Aorta (tissue), 5 donors: ENCODE measurements at regions of chr19 and their contacts with region 1.

Region 1: DNA sequence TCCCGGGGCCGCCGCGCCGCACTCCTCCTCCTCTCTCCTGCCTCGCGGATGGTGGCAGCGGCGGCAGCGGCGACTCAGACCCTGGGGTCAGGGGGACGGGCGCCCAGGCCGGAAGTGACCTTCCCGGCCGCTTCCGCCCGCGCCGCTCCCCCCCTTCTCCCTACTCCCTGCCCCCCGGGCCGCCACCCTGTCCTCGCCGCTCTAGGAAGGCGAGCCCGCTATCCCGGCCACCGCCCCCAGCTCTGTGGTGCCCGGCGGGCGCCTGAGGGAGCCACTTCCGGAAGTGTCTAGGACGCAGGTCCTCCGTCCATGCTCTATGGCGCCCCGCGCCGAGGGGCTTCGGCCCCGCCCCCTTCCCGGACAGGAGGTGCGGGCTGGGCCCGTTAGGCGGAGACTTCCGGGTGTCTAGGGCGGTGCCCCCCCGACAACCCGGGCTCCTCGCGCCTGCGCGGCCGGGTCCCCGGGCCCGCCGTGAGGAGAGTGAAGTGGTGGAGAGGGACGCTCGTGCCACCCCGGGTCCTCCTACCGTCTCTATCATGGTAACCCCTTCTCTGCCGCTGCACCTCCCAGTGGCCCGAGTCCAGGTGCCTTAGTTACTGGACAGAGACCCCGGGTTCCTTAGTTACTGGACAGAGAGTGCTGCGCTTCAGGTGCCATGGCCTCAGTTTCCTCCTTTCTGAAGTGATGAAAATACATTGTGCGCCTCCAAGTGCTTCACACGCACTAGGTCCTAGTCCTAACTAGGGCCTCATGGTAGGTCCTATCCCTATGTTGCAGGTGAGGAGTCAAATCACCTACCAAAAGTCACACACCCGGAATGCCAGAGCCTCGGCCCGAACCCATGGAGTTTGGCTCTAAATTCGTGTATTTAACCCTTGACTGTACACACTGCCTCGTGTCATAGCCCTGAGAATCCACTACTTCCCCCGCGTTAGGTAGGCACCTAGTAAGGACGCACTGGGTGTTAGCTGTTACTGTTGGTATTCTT is at the start of gene ZNF787:
- DNase-seq: peak; percentile 99
- ATAC-seq: peak; percentile 98
- H3K4me3 ChIP-seq: peak within 1 kb of the TSS; percentile 69 to 90
- H3K27ac ChIP-seq: peak within 1 kb of the TSS in 1 of 2 donors; percentile 71
- H3K4me1 ChIP-seq: no peaks in the 10 kb centered on the region
- H3K27me3 ChIP-seq: no peaks in the 10 kb centered on the region
- total RNA-seq, gene ZNF787: 23.9 to 25.5 TPM

Region 2: DNA sequence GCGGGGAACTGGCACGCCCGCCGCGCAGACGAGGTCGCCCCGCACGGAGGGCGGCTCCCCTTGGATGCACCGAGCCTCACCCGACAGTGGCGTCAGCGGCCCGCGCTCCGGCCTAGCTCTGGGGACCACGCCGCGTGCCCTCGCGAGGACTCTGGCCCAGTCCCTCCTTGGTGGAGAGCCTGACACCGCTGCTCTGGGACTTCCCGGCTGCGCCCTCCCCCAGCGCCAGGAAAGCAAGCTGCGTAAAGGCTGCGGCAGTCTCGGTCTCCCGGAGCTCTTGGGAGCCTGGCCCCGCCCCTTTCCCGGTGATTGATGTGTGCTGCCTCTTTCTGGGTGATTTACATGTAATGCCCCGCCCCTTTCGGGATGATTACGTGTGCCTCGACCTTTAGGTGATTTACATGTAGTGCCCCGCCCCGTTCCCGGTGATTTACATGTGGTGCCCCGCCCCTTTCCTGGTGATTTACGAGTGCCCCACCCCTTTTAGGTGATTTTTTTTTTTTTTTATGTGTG is 1657.9 kb before region 1 on chr19 and contains the start of gene LENG9:
- intact Hi-C with region 1: loop called in 1 of 2 experiments (anchors 10 kb)
- DNase-seq: peak; percentile 99
- ATAC-seq: peak; percentile 87
- H3K4me3 ChIP-seq: peak within 1 kb of the TSS; percentile 39 to 47
- H3K27ac ChIP-seq: peak within 1 kb of the TSS; percentile 62 to 98
- H3K4me1 ChIP-seq: no peaks in the 10 kb centered on the region
- H3K27me3 ChIP-seq: no peaks in the 10 kb centered on the region
- total RNA-seq, gene LENG9: 5.4 to 7.4 TPM

Region 3: GRCh38 chr19:55653758-55654539 is 467.5 kb before region 1 on chr19:
- intact Hi-C with region 1: loop called in 1 of 2 experiments (anchors 10 kb)
- DNase-seq: peak; percentile 100
- ATAC-seq: peak; percentile 94
- H3K4me3 ChIP-seq: peak overlapping the region; percentile 39 to 57
- H3K27ac ChIP-seq: peak overlapping the region in 1 of 2 donors; percentile 97
- H3K4me1 ChIP-seq: peaks cover 0 to 6% of the 10 kb centered on the region in 2 donors
- H3K27me3 ChIP-seq: no peaks in the 10 kb centered on the region

Region 4: DNA sequence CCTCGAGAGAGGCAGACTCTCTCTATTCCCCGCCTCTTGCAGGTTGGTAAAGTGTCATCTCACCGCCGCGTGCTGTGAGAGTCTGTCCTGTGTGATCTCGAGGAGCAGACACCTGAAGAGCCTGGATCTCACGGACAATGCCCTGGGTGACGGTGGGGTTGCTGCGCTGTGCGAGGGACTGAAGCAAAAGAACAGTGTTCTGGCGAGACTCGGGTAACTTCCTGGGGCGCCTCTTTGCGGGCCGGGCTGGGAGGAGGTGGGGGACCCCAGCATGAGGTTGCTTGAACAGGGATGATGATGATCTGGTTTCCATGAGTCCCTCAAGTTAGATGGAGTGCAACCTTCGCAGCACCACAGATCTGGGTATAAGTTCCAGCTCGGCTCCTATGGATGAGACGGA is 67.9 kb before region 1 on chr19:
- intact Hi-C with region 1: no loop called
- DNase-seq: no peak
- ATAC-seq: no peak
- H3K4me3 ChIP-seq: no peak overlapping the region
- H3K27ac ChIP-seq: no peak overlapping the region
- H3K4me1 ChIP-seq: no peaks in the 10 kb centered on the region
- H3K27me3 ChIP-seq: peaks cover 0 to 3% of the 10 kb centered on the region in 2 donors